HEK293T (cell line): ENCODE measurements at regions of chr14 and their contacts with region 1.

Region 1: GRCh38 chr14:64636208-64636979 is 67.8 kb upstream of the PLEKHG3 start:
- DNase-seq: peak; percentile 80

Region 2: GRCh38 chr14:64625475-64626269 is 10.7 kb before region 1 on chr14:
- CTCF ChIA-PET with region 1: interaction called, 13 read pairs
- POLR2A ChIA-PET with region 1: no interaction called
- DNase-seq: no peak